Activated CD4-positive, alpha-beta memory T cell treated with anti-CD3 and anti-CD28 coated beads for 36 hours (primary cell): ENCODE measurements at regions of chr4 and their contacts with region 1.

Region 1: GRCh38 chr4:11487876-11488544 is 59.3 kb upstream of the HS3ST1 start:
- DNase-seq: no peak
- H3K4me3 Mint-ChIP-seq: no peak overlapping the region
- H3K27ac Mint-ChIP-seq: no peak overlapping the region
- H3K4me1 Mint-ChIP-seq: peaks cover 24% of the 10 kb centered on the region
- H3K27me3 Mint-ChIP-seq: no peaks in the 10 kb centered on the region

Region 2: DNA sequence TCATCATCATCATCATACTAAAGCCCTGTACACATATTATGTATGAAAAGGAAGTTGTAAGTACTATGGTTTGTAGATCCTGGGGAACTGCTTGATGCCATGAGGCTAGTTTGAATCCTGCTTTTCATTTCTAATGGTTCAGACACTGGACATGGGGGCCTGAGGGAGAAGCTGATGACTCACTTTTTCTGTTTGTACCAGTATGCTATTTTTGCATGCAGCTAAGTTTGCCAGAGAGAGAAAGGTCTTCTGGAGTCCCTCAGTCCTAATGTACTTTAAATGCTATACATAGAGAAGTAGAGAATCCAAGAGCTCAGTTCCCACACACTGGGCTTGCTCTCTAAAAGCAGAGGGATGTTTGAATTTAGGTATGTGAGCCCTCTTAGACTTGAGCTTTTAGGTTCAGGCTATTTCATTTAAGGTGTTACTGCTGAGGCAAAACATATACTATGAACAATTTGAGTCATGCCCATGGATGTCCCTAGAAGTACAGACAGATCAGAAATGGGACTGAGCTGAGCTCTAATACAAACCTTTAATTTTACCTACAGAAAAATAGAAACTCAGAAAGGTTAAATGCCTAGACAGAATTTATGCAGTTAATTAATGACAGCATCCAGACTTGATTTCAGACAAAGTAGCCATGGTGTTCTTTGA is 41.7 kb before region 1 on chr4:
- CTCF ChIA-PET with region 1: no interaction called
- POLR2A ChIA-PET with region 1: no interaction called
- intact Hi-C with region 1: no loop called
- DNase-seq: no peak
- H3K4me3 Mint-ChIP-seq: no peak overlapping the region
- H3K27ac Mint-ChIP-seq: no peak overlapping the region
- H3K4me1 Mint-ChIP-seq: no peaks in the 10 kb centered on the region
- H3K27me3 Mint-ChIP-seq: peaks cover 2% of the 10 kb centered on the region

Region 3: GRCh38 chr4:11505221-11505971 is 17.4 kb after region 1 on chr4:
- CTCF ChIA-PET with region 1: interaction called, 3 read pairs
- POLR2A ChIA-PET with region 1: no interaction called
- intact Hi-C with region 1: loop called (anchors 2 kb)
- DNase-seq: peak; percentile 51
- H3K4me3 Mint-ChIP-seq: no peak overlapping the region
- H3K27ac Mint-ChIP-seq: peak overlapping the region; percentile 50
- H3K4me1 Mint-ChIP-seq: peaks cover 20% of the 10 kb centered on the region
- H3K27me3 Mint-ChIP-seq: no peaks in the 10 kb centered on the region